ENCODE measurements at regions of chr5 and their contacts with region 1.

Region 1: DNA sequence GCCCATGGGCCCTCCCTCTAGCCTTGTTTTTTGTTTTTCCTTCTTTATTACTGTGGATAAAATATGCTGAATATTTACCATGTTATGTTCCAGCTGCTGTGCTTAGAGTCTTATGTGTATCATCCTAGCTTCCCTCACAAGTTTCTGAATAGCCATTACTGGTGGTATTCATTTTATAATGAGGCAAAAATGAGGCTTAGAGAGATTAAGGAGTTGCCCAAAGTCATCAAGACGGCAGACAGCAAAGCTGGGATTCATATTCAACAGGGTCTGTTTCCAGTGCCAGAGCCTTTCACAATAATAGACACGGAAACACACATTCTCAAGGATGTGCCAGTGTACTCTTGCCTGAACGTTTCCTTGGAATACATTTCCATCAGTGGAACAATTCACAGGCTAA is 258.1 kb downstream of the CTNND2 start:
- DNase-seq: no peak
- H3K4me3 ChIP-seq: no peak overlapping the region
- H3K27ac ChIP-seq: no peak overlapping the region
- H3K4me1 ChIP-seq: no peaks in the 10 kb centered on the region
- H3K27me3 ChIP-seq: no peaks in the 10 kb centered on the region
- CTCF ChIP-seq: no peak

Region 2: DNA sequence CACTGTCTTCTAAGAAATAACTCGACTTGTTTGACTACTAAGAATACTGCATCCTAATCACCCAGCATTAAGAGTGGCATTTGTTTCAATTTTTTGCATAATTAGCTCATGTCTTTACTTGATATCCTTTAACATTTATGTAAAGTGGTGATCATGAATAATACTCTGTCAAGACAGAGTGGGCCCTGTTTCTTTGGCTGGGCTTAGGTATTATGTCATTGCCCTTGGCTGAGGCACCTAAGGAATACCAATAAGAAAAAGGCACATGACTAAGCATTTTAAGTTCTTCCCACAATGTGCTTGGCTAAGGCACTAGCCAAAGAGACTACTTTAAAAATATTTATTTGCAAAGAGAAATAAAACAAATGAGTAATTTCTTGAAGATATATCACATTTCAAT is 50.0 kb before region 1 on chr5:
- CTCF ChIA-PET with region 1: no interaction called
- dilution Hi-C with region 1: loop called (anchors 5 kb)
- in situ Hi-C with region 1: no loop called
- intact Hi-C with region 1: no loop called
- DNase-seq: no peak
- H3K4me3 ChIP-seq: no peak overlapping the region
- H3K27ac ChIP-seq: no peak overlapping the region
- H3K4me1 ChIP-seq: no peaks in the 10 kb centered on the region
- H3K27me3 ChIP-seq: no peaks in the 10 kb centered on the region
- CTCF ChIP-seq: no peak